Activated T-helper 1 cell treated with anti-CD3 and anti-CD28 coated beads, Interleukin-12 subunit alpha, Interleukin-12 subunit beta, Interleukin-2, Interleukin-4 antibody, amounts not matched to agents 30 ng/mL and 10 ng/mL and 1 ng/mL, durations not matched to agents 14 hours and 24 hours and 36 hours (primary cell): ENCODE measurements at regions of chr3 and their contacts with region 1.

Region 1: DNA sequence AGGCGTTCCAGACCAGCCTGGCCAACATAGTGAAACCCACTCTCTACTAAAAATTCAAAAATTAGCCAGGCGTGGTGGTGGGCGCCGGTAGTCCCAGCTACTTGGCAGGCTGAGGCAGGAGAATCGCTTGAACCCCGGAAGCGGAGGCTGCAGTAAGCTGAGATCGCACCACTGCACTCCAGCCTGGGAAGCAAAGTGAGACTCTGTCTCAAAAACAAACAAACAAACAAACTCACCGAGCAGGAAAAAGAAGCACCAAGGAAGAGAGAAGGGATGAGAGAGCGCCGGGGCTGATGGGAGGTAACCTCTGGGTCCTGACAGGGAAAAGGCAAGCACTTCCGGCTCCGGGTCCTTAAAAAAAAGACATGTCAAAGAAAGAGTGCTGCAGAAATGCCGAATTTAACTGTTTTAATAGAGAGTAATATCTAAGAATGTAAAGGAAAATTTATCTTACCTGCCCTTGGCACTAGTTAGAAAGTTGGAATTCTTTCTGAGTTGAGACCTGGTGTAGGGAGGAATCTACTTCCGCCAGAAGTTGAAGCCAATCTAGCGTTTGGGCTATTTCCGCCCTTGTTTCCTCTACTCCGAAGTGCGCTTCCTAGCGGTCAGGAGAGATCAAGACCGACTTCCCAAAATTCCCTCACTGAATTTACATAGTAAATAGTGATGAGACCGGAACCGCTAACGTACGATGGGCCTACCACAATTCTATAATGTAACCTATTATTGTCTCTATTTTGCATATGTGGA is 29.1 kb downstream of the EFCAB12 start:
- DNase-seq: peak; percentile 73
- H3K4me3 Mint-ChIP-seq: peak overlapping the region; percentile 96
- H3K27ac Mint-ChIP-seq: peak overlapping the region; percentile 94
- H3K4me1 Mint-ChIP-seq: peaks cover 23% of the 10 kb centered on the region
- H3K27me3 Mint-ChIP-seq: no peaks in the 10 kb centered on the region

Region 2: GRCh38 chr3:128123538-128124368 is 1275.6 kb before region 1 on chr3 and contains the start of gene RUVBL1:
- intact Hi-C with region 1: loop called (anchors 2 kb)
- DNase-seq: peak; percentile 95
- H3K4me3 Mint-ChIP-seq: peak within 1 kb of the TSS; percentile 99
- H3K27ac Mint-ChIP-seq: peak within 1 kb of the TSS; percentile 99
- H3K4me1 Mint-ChIP-seq: peaks cover 24% of the 10 kb centered on the region
- H3K27me3 Mint-ChIP-seq: peaks cover 1% of the 10 kb centered on the region
- total RNA-seq, gene RUVBL1: 135 and 137 TPM in 2 replicates

Region 3: DNA sequence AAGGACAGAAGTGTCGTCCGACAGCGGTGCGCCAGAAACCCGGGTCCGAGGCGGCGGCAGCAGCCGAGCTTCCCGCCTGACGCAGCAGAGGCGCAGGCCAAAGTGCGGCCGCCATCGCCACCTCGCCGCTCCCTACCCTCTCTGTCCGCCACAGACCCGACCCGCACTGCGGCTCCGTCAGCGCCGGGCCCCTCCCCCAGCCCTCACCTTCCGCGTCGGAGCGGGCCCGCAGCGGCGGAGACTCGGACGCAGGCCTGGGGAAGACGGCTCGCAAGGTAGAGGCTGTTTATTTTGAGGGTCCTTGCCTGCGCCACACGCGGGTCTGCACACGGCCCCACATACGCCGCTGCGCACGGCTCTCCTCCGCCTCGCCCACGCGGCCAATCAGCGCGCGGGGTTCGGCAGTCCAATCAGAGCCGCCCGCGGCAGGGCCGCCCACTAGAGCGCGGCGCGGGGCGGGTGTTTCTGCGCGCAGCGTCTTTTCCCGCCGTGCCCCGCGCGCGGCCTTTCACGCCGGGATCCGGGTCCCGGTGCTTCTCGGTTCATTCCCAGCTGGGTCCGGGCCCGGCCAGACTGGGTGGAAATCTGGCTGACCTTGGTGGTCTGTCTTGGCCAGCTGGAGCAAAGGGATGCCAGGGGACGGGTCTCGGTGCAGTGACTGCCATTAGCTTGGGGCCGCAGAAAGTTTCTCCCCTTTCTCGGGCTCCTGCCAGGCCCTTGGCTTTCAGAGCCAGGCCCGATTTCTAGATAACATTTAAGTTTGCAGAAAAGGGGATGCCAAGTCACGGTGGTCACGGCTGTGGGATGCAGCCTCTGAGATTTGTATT is 215.5 kb before region 1 on chr3 and contains the start of gene CNBP:
- intact Hi-C with region 1: loop called (anchors 5 kb)
- DNase-seq: peak; percentile 91
- H3K4me3 Mint-ChIP-seq: peak within 1 kb of the TSS; percentile 97
- H3K27ac Mint-ChIP-seq: peak within 1 kb of the TSS; percentile 98
- H3K4me1 Mint-ChIP-seq: peaks cover 35% of the 10 kb centered on the region
- H3K27me3 Mint-ChIP-seq: no peaks in the 10 kb centered on the region
- total RNA-seq, gene CNBP: 408 and 425 TPM in 2 replicates

Region 4: DNA sequence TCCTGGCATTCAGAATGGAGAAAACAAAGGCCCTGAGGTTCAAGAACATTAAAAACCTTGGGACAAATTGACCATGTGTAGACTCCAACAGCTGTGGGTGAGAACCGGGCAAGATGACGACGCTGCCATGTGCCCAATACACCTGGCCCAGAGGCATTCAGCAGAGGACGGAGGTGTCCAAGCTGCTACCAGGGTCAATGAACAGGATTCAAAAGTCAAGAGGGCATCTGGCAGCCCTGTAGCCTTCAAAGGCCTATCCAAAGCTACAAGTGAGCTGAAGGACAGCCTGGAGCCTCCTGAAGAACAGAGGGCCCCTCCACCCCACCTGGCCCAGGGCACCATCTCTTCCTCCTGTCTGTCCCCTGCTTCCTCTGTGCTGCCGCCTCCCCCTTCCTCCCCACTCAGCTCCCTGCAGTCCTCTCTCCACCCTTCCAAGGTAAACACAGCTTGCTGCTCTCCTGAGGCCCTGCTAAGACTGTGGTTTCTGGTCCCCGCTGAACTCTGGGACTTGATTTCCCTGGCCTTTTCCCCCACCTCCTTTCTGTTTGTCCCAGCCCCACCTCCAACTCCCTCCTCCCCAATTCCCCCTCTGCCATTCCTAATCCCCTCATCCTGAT is 63.1 kb before region 1 on chr3:
- intact Hi-C with region 1: no loop called
- DNase-seq: no peak
- H3K4me3 Mint-ChIP-seq: no peak overlapping the region
- H3K27ac Mint-ChIP-seq: no peak overlapping the region
- H3K4me1 Mint-ChIP-seq: no peaks in the 10 kb centered on the region
- H3K27me3 Mint-ChIP-seq: peaks cover 18% of the 10 kb centered on the region

Region 5: GRCh38 chr3:129428376-129429079 is 29.2 kb after region 1 on chr3 and contains the start of gene EFCAB12:
- intact Hi-C with region 1: loop called (anchors 1 kb)
- DNase-seq: peak; percentile 88
- H3K4me3 Mint-ChIP-seq: peak within 1 kb of the TSS; percentile 41
- H3K27ac Mint-ChIP-seq: peak within 1 kb of the TSS; percentile 69
- H3K4me1 Mint-ChIP-seq: peaks cover 51% of the 10 kb centered on the region
- H3K27me3 Mint-ChIP-seq: peaks cover 4% of the 10 kb centered on the region
- total RNA-seq, gene EFCAB12: 0.32 and 0.34 TPM in 2 replicates

Region 6: GRCh38 chr3:129756871-129757270 is 357.6 kb after region 1 on chr3:
- intact Hi-C with region 1: no loop called
- DNase-seq: no peak
- H3K4me3 Mint-ChIP-seq: no peak overlapping the region
- H3K27ac Mint-ChIP-seq: no peak overlapping the region
- H3K4me1 Mint-ChIP-seq: no peaks in the 10 kb centered on the region
- H3K27me3 Mint-ChIP-seq: peaks cover 2% of the 10 kb centered on the region

Region 7: GRCh38 chr3:130111185-130111864 is 712.0 kb after region 1 on chr3:
- intact Hi-C with region 1: loop called (anchors 2 kb)
- DNase-seq: peak; percentile 98
- H3K4me3 Mint-ChIP-seq: peak overlapping the region; percentile 96
- H3K27ac Mint-ChIP-seq: peak overlapping the region; percentile 97
- H3K4me1 Mint-ChIP-seq: peaks cover 20% of the 10 kb centered on the region
- H3K27me3 Mint-ChIP-seq: peaks cover 6% of the 10 kb centered on the region